ENCODE measurements at regions of chr3 and their contacts with region 1.

Region 1: DNA sequence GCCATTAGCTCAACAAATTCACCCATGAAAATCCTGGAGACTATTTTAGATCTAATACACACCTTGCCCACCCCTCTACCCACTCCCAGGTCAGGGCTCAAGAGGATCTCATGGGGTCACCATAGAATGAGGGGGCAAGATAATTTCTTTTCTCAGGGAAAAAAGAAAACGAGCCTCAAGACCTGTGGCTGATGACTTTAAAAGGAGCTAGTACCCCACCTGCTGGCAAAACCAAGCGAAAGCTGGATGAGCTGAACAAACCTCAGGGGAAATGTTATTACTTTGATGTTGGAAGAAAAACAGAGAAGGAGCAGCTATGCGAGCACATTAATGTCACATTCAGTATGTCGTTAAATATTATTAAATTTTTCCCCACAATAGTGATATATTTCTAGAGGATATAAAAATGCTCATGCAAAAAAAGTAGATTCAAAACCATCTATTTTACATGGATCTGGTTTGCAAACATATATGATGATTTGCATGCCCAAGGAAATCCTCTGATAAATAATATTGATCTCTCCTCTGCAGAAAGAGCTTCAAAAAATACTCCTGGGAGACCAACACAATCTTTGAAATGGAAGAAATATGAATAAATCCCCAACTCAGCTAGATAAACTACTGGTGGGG is 37.7 kb downstream of the PLD1 start:
- DNase-seq: no peak
- H3K4me3 Mint-ChIP-seq: no peak overlapping the region
- H3K27ac Mint-ChIP-seq: no peak overlapping the region
- H3K4me1 Mint-ChIP-seq: no peaks in the 10 kb centered on the region
- H3K27me3 Mint-ChIP-seq: peaks cover 28% of the 10 kb centered on the region

Region 2: DNA sequence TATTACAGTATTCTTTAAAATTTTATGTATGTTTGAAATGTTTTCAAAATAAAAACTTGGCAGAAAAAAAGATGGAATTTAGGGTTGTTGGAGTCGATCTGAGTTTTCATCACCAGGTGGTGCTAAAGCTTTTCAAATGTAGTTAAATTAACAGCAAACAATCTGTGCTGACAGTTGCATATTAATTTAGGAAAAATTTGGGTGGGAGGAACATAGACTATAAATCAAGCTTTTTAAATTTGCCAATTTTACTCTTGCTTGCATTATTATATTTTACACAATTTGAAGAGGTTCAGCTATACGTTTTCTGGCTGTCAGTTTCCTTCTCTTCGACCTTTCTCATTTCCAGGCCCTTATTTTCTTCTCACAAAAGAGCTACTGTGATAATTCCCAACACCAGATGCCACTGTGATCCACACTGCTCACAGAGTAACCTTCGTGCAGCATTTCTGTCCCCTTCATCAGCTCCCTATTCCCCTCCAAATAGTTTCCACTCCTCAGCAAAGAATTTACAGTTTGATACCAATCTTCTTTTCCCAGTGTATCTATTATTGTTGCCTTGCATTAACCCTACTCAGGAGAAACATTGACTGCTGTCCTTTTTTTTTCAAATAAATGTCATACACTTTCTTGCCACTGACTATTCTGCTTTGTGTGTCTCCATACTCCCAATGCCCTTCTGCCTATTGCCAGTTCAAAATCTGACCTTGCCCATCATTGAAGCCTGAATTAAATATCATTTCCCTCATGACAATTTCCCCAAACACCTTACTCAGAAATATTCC is 810.7 kb before region 1 on chr3:
- intact Hi-C with region 1: loop called (anchors 2 kb)
- DNase-seq: no peak
- H3K4me3 Mint-ChIP-seq: no peak overlapping the region
- H3K27ac Mint-ChIP-seq: no peak overlapping the region
- H3K4me1 Mint-ChIP-seq: no peaks in the 10 kb centered on the region
- H3K27me3 Mint-ChIP-seq: peaks cover 24% of the 10 kb centered on the region

Region 3: DNA sequence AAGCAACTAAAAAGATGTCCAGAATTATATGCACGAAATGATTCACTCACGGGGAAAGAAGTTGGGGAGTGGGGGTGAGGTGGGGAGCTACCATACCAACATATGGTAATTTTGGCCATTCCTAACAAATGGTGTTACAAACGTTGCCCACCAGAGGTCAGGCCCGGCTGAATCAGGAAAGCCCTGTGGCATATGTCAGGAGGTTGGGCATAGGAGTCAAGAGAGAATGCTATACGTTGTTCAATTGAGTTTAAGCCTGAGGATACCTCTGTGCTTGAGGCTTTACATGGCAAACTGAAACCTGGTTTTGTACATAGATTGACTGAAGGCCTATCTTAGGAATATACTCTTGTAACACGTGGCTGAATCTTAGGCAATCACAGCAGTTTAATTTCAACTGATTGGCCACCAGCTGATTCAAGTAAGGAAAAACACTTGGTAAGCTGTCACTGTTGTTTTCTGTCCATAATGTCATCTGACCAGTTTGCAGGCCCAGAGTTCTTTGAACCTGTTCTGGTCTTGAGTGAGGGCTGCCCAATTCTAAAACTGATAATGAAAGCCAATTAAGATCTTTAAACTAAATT is 722.6 kb before region 1 on chr3:
- intact Hi-C with region 1: loop called (anchors 1 kb)
- DNase-seq: peak; percentile 22
- H3K4me3 Mint-ChIP-seq: no peak overlapping the region
- H3K27ac Mint-ChIP-seq: no peak overlapping the region
- H3K4me1 Mint-ChIP-seq: no peaks in the 10 kb centered on the region
- H3K27me3 Mint-ChIP-seq: peaks cover 7% of the 10 kb centered on the region

Region 4: GRCh38 chr3:171646357-171647133 is 126.0 kb before region 1 on chr3:
- intact Hi-C with region 1: loop called (anchors 1 kb)
- DNase-seq: no peak
- H3K4me3 Mint-ChIP-seq: no peak overlapping the region
- H3K27ac Mint-ChIP-seq: no peak overlapping the region
- H3K4me1 Mint-ChIP-seq: no peaks in the 10 kb centered on the region
- H3K27me3 Mint-ChIP-seq: peaks cover 3% of the 10 kb centered on the region

Region 5: GRCh38 chr3:171703756-171704401 is 68.7 kb before region 1 on chr3:
- intact Hi-C with region 1: loop called (anchors 5 kb)
- DNase-seq: no peak
- H3K4me3 Mint-ChIP-seq: no peak overlapping the region
- H3K27ac Mint-ChIP-seq: no peak overlapping the region
- H3K4me1 Mint-ChIP-seq: no peaks in the 10 kb centered on the region
- H3K27me3 Mint-ChIP-seq: peaks cover 29% of the 10 kb centered on the region

Region 6: DNA sequence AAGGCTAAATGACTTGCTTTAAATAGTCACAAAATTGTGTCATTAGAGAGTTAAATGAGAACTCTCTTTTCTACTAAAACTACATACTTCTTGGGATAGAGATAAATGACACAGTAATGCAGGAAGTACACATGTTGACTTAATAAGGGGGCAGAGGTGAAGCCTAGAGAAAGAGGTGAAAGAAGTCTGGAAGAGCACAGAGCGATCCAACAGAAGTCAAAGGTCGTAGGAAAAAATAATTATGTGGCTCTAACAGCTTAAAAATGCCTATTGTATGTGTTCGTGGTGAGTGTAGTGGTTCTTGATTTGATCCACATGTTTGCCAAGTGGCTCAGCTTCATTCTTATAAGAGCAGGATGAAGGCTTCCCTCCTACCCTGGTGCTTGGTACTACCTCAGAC is 132.3 kb after region 1 on chr3:
- intact Hi-C with region 1: no loop called
- DNase-seq: no peak
- H3K4me3 Mint-ChIP-seq: no peak overlapping the region
- H3K27ac Mint-ChIP-seq: no peak overlapping the region
- H3K4me1 Mint-ChIP-seq: no peaks in the 10 kb centered on the region
- H3K27me3 Mint-ChIP-seq: peaks cover 4% of the 10 kb centered on the region